Pancreas (tissue), 10 donors: ENCODE measurements at regions of chr6 and their contacts with region 1.

Region 1: GRCh38 chr6:42166444-42167141 is 6.6 kb upstream of the GUCA1A start:
- DNase-seq: peak in 5 of 6 donors; percentile 35 to 79 (median 67)
- ATAC-seq: peak; percentile 75 to 98 (median 90)
- H3K4me3 ChIP-seq: no peak overlapping the region
- H3K27ac ChIP-seq: no peak overlapping the region
- H3K4me1 ChIP-seq: no peaks in the 10 kb centered on the region
- H3K27me3 ChIP-seq: no peaks in the 10 kb centered on the region
- CTCF ChIP-seq: peak; percentile 87 to 95 (median 89)

Region 2: DNA sequence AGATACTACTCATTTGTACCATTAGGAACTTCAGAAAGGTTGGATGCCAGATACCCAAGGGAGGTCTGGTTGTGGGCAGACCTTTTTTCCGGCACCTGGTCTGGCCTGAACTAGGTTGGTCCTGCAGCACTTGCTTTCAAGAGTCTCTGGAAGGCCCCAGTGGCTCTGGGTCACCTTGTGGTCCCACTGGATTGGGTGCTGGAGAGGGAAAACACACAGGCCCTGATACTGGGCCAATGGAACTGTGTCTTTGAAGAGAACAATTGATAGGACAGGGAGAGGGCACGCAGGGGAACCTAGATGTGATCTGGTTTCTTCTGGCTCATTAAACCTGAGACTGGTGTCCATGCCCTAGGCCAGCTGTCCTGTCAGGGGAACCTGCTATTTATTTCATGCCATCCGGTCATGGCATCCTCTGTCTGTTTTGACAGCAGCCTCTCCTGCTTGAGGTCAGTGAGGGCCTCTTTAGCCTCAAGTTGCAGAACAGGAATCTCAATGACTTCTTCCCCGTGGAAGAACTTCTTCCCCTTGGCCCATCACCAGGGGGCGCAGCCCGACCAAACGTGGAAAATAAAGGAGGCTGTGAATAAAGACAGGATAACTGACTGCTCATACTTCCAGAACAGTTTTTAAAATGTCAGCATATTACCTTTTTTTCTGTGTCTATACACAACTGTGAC is 91.3 kb before region 1 on chr6:
- intact Hi-C with region 1: loop called (anchors 5 to 10 kb)
- DNase-seq: peak; percentile 66 to 90 (median 82)
- ATAC-seq: peak; percentile 80 to 96 (median 92)
- H3K4me3 ChIP-seq: no peak overlapping the region
- H3K27ac ChIP-seq: no peak overlapping the region
- H3K4me1 ChIP-seq: no peaks in the 10 kb centered on the region
- H3K27me3 ChIP-seq: no peaks in the 10 kb centered on the region
- CTCF ChIP-seq: peak; percentile 41 to 65 (median 64)